Activated T-helper 1 cell treated with anti-CD3 and anti-CD28 coated beads, Interleukin-12 subunit alpha, Interleukin-12 subunit beta, Interleukin-2, Interleukin-4 antibody, amounts not matched to agents 30 ng/mL and 10 ng/mL and 1 ng/mL, durations not matched to agents 14 hours and 24 hours and 36 hours (primary cell): ENCODE measurements at regions of chr20 and their contacts with region 1.

Region 1: DNA sequence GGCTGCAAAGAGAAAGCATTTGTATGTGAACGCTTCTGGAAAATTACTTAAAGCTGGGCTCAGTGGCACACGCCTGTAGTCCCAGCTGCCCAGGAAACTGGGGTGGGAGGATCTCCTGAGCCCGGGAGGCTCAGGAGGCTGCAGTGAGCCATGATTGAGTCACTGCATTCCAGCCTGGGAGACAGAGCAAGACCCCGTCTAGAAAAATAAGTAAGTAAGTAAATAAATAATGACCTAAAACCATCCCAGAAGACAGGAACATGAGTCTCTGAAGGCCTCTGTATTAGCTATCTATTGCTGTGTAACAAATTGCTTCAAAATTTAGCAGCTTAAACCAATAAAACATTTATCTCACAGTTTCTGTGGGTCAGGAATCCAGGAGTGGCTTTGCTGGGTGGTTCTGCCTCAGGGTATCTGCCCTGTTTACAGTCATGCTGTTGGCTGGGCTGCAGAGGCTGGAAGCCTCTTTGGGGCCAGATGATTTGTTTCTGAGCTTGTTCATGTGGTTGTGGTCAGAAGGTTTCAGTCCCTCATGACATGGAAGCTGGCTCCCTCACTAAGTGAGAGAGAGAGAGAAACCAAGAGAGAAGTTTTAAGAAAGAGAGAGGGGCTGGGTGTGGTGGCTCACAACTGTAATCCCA is 48.4 kb upstream of the NCOA3 start:
- DNase-seq: peak; percentile 47
- H3K4me3 Mint-ChIP-seq: peak overlapping the region; percentile 15
- H3K27ac Mint-ChIP-seq: peak overlapping the region; percentile 70
- H3K4me1 Mint-ChIP-seq: peaks cover 44% of the 10 kb centered on the region
- H3K27me3 Mint-ChIP-seq: no peaks in the 10 kb centered on the region

Region 2: DNA sequence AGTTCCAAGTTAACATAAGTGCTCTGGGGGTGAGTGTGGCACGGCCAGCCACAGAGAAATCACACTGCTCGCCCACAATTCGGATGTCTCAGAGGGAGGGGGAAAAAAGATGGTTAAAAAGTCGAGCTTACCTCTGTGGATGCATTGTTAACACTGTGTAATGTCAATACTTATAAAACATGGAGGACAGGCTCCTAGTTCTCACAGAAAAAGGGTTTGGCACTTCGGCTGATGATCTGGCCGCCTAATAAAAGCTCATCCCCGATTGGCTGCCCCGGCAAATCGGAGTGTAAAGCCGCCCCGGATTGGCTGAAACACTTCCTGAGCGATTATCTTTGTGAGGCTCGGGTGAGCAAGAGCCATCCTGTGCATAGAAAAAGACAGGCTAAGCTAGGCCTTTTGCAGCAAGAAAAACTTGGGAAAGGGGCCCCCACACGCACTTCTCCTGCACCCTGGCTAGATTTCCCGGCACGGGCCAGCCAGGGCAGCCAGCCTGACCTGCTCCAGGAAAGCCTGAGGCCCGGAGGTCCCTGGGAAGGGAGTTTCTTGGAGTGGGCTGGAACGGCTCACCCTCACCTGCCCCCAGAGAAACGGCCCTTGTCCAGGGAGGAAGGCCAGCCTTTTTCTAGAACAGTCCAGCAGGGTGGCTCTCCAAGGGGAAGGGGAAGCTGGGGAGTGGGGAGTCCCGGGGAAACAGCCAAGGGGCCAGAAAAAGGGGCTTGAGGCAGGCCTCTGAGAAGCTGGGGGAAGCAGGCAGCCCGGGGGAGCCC is 96.6 kb before region 1 on chr20 and contains the start of gene ZMYND8:
- intact Hi-C with region 1: loop called (anchors 2 kb)
- DNase-seq: peak; percentile 96
- H3K4me3 Mint-ChIP-seq: peak within 1 kb of the TSS; percentile 92
- H3K27ac Mint-ChIP-seq: peak within 1 kb of the TSS; percentile 99
- H3K4me1 Mint-ChIP-seq: no peaks in the 10 kb centered on the region
- H3K27me3 Mint-ChIP-seq: no peaks in the 10 kb centered on the region
- total RNA-seq, gene ZMYND8: 42.6 and 43.3 TPM in 2 replicates

Region 3: DNA sequence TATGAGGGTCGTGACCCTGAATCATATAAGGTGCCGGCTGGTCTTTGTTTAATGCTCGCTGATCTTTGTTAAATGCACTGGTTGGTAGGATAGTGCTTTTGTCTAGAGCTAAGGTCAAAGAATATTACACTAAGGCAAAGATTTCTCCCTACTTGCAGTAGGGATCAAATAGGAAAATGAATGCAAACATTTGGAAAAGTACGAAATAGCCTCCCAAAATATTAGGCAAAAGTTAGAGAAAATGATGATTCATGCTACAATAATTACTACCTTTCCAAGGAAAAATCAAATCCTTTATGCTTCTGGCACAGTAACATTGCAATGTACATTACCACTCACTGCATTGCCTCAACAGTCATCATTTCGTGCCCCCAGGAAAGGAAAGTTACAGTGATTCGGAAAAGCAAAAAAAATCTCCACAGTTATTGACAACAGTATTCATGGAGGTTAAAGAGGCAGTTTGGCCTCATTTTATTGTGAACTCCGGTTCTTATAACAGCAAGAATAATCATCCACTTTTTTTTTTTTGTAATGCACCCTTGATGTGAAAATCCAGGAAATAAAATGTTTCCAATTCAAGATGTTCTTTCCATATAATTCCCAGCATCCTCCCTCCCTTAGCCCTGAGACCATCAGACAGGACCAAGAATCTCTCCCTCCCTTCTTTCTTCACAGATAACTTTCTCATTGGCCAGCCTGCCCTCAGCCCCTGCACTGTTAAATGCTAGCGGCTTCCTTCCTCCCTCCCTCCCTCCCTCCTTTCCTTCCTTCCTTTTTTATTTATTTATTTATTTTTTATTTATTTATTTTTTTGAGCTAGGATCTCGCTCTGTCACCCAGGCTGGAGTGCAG is 35.0 kb before region 1 on chr20:
- intact Hi-C with region 1: loop called (anchors 5 kb)
- DNase-seq: no peak
- H3K4me3 Mint-ChIP-seq: no peak overlapping the region
- H3K27ac Mint-ChIP-seq: no peak overlapping the region
- H3K4me1 Mint-ChIP-seq: peaks cover 22% of the 10 kb centered on the region
- H3K27me3 Mint-ChIP-seq: no peaks in the 10 kb centered on the region

Region 4: DNA sequence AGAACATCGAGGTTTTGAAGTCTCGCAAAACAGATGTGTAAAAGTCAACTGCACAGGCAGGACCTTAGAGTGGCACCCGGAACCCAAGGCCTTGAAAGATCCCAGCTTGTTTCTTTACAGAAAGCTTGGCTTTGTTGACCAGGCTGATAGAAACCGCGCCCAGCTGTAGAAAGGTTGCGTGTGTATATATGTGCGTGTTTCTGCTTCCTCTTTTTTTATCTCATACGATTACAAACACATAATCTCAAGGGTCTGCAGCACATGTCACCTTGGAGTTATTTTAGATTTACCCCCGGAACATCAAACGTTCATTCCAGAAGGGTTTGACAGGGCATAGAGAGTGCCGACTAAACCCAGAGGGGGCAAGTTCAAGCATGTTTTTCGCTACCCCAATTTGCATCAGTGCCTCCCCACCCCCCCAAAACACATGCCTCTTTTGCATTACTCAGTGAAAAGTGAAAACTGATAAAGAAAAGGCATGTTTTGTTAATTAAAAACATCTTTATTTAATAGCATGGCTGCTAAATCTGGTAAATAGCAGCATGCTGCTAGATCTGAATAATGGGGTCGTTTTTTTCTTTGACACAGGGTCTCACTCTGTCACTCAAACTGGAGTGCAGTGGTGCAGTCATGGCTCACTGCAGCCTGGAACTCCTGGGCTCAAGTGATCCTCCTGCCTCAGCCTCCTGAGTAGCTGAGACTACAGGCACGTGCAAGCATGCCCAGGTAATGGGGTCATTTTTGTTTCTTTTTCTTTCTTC is 15.2 kb after region 1 on chr20:
- intact Hi-C with region 1: loop called (anchors 2 kb)
- DNase-seq: no peak
- H3K4me3 Mint-ChIP-seq: no peak overlapping the region
- H3K27ac Mint-ChIP-seq: no peak overlapping the region
- H3K4me1 Mint-ChIP-seq: peaks cover 13% of the 10 kb centered on the region
- H3K27me3 Mint-ChIP-seq: no peaks in the 10 kb centered on the region

Region 5: DNA sequence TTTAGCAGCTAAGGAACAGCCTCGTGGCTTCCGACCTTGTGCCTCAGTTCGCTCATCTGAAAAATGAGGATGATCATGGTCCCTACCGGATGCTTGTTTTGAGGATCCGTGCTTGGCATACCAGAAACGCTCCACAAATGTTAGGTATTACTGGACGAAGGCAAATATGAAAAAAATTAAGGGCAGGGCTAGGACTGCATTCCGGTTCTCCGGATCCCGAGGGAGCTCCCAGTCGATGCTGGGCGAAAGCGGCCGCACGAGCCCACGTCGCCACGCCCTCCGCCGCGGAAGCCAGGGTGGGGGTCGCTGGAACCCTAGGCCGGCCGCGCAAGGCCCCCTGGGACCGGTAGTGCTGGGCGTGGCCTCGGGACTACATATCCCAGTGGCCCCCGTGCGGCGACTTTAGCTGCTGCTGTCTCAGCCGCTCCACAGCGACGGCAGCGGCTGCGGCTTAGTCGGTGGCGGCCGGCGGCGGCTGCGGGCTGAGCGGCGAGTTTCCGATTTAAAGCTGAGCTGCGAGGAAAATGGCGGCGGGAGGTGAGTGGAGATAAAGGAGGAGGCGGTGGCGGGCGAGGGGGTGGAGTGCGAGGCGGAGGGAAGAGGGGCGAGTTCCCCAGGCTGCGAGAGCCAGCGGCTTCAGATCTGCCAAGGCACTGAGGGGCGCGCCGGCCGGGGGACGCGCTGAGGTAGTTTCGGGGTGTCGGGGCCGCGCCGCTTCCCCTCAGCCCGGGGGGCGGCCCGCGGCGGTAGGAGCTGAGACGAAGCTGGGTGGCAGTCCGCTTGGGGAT is 48.4 kb after region 1 on chr20 and contains the start of gene NCOA3:
- intact Hi-C with region 1: loop called (anchors 1 kb)
- DNase-seq: peak; percentile 89
- H3K4me3 Mint-ChIP-seq: peak within 1 kb of the TSS; percentile 92
- H3K27ac Mint-ChIP-seq: peak within 1 kb of the TSS; percentile 99
- H3K4me1 Mint-ChIP-seq: peaks cover 61% of the 10 kb centered on the region
- H3K27me3 Mint-ChIP-seq: no peaks in the 10 kb centered on the region
- total RNA-seq, gene NCOA3: 132 and 133 TPM in 2 replicates

Region 6: DNA sequence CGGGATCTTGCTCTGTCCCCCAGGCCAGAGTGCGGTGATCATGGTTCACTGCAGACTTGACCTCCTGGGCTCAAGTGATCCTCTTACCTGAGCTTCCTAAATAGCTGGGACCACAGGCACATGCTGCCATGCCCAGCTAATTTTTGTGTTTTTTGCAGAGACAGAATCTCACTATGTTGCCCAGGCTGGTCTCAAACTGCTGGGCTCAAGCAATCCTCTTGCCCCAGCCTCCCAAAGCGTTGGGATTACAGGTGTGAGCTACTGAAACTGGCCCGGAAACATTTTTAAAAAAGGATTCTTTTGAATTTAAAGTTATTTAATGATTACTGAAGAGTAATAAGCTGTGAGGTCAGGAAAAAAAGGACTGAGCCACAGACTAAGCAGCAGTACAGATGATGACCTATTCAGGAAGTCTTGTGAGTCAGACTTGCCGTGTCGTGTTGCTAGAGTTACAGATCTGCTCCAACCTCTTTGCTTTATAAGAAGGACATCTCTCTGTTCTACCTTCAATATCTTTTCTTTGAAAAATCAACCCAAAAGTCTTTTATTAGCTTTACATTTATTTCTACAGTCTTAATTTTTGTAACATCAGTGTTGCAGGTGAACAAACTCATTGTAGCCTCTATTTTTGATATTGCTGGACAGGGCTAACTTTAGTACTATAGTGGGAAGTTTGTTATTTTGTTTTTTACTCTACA is 157.1 kb after region 1 on chr20:
- intact Hi-C with region 1: loop called (anchors 1 kb)
- DNase-seq: peak; percentile 60
- H3K4me3 Mint-ChIP-seq: peak overlapping the region; percentile 77
- H3K27ac Mint-ChIP-seq: peak overlapping the region; percentile 97
- H3K4me1 Mint-ChIP-seq: peaks cover 84% of the 10 kb centered on the region
- H3K27me3 Mint-ChIP-seq: no peaks in the 10 kb centered on the region